ENCODE measurements at regions of chr12 and their contacts with region 1.

Region 1: DNA sequence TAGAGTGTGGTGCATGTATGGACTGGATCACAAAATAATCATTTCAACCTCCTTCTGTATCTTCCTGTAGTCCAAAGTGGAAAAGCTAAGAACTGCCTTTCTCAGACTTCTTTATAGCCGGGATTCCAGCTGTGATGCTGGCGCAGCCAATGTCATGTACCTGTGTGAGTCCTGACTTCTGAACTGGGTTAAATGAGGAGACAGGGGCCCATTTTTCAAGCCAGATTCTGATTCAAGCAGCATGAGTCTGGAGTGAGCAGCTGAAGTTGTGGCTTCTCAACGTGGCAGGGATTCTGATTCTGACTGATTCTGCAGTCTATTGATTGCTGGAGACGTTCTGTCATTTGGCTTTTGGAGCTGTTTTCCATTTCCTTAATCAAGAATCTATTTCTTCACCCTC is 111.2 kb downstream of the ST8SIA1 start:
- DNase-seq: no peak
- H3K27ac ChIP-seq: no peak overlapping the region
- CTCF ChIP-seq: no peak

Region 2: GRCh38 chr12:22190969-22191368 is 32.4 kb before region 1 on chr12:
- CTCF ChIA-PET with region 1: interaction called, 10 read pairs
- POLR2A ChIA-PET with region 1: no interaction called
- DNase-seq: no peak
- H3K27ac ChIP-seq: no peak overlapping the region
- CTCF ChIP-seq: no peak

Region 3: DNA sequence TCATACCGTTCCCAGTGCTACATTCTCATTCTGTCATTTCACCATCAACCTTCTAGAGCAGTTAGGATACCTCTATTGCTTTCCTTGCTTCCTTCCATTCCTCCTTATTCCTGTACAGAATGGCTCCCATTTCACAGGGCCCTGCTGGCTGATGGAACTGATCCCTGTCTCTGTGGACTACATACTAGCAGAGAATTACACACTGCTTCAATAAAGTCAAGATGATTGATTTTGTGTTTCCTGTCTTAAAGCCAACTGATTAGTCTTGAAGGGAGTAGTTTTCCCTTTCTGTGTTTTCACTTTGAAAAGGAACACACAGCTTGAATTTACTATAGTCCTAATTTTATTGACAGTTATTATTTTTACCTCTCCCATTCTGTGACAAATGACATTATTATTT is 19.0 kb before region 1 on chr12:
- CTCF ChIA-PET with region 1: no interaction called
- POLR2A ChIA-PET with region 1: no interaction called
- DNase-seq: no peak
- H3K27ac ChIP-seq: no peak overlapping the region
- CTCF ChIP-seq: no peak

Region 4: GRCh38 chr12:22275846-22276245 is 52.5 kb after region 1 on chr12:
- CTCF ChIA-PET with region 1: no interaction called
- POLR2A ChIA-PET with region 1: no interaction called
- DNase-seq: peak; percentile 85
- H3K27ac ChIP-seq: peak overlapping the region; percentile 96
- CTCF ChIP-seq: no peak

Measured in RWPE1 (cell line).